Mammary epithelial cell (primary cell): ENCODE measurements at regions of chr14 and their contacts with region 1.

Region 1: DNA sequence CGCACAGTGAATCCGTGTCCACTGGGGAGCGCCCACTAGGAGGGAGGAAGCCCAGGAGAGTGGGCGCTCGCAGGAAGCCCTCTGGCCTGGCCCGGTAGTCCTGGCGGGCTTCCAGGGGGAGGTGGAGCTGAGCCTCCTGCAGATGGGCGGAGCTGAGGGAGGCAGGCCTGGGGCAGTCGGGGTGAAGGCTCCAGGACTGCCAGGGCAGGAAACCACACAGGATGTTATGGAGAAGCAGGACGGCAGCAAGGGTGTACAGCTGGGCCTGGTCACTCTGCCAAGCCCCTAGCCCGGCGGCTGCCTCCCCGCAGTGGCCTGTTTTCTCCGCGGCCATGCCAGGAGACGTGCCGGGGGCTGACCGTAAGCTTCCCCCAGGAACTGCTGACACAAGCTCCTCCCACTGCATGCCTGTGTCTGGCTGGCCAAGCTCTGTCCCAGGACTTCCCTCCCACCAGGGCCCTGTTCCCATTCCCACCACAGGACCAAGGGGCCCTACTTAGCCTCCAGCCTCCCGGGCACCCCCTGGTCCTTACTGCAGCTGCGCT is 143.4 kb upstream of the C14orf180 start:
- DNase-seq: no peak
- H3K4me3 ChIP-seq: no peak overlapping the region
- H3K27ac ChIP-seq: no peak overlapping the region
- H3K4me1 ChIP-seq: no peaks in the 10 kb centered on the region
- H3K27me3 ChIP-seq: no peaks in the 10 kb centered on the region
- CTCF ChIP-seq: no peak

Region 2: DNA sequence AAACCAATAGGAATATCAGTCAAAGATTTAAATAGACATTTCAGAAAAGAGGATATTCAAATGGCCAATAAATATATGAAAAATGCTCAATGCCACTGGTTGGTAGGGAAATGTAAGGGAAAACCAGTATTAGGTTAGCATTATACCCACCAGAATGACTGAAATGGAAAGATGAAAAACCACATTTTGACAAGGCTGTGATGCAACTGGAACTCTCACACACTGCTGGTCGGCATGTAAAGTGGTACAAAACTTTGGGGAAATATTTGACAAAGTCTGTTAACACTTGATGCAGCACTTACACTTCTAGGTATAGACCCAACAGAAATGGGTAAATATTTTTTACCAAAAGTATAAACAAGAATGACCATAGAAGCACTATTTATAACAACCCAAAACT is 19.7 kb before region 1 on chr14:
- CTCF ChIA-PET with region 1: no interaction called
- dilution Hi-C with region 1: no loop called
- in situ Hi-C with region 1: no loop called
- intact Hi-C with region 1: no loop called
- DNase-seq: no peak
- H3K4me3 ChIP-seq: no peak overlapping the region
- H3K27ac ChIP-seq: no peak overlapping the region
- H3K4me1 ChIP-seq: no peaks in the 10 kb centered on the region
- H3K27me3 ChIP-seq: no peaks in the 10 kb centered on the region
- CTCF ChIP-seq: no peak

Region 3: DNA sequence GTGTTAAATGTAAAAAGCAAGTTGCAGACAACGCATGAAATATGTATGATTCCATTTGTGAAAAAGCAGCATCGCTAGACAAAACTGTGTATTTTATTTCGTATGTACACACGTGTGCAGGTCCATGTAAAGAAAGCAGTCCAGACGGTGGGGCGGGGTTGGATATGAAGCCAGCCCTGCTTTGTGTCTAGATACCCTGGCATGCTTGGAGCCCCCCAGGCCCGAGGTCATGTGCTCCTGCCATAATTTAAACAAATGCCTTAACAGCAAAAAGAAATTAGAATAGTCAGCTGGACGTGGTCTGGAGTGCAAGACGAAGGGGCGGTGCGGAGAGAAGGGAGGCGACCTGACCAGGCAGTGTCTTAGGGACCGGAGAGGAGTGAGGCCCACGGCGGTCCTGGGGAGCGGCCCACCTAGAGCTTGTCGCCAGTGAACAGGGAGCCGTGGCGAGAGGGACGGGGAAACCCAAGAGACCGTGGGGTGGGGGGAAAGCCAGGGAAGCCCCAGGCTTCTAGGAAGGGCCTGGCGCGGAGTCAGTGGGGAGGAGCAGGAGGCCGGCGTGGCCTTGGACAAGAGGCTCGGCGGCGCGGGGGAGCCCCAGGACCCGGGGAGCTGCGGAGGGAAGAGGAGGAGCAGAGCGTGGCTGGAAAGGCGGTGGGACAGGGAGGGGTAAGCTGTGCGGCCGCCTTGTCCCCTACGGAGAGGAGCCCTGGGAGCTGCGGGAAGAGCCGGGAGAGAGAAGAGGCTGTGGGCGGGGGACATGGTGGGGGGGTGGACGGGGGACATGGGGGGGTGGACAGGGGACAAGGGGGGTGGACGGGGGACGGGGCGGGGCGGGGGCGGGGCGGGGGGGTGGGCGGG is 24.9 kb after region 1 on chr14:
- CTCF ChIA-PET with region 1: no interaction called
- dilution Hi-C with region 1: no loop called
- in situ Hi-C with region 1: no loop called
- intact Hi-C with region 1: no loop called
- DNase-seq: no peak
- H3K4me3 ChIP-seq: no peak overlapping the region
- H3K27ac ChIP-seq: no peak overlapping the region
- H3K4me1 ChIP-seq: no peaks in the 10 kb centered on the region
- H3K27me3 ChIP-seq: peaks cover 8% of the 10 kb centered on the region
- CTCF ChIP-seq: no peak

Region 4: DNA sequence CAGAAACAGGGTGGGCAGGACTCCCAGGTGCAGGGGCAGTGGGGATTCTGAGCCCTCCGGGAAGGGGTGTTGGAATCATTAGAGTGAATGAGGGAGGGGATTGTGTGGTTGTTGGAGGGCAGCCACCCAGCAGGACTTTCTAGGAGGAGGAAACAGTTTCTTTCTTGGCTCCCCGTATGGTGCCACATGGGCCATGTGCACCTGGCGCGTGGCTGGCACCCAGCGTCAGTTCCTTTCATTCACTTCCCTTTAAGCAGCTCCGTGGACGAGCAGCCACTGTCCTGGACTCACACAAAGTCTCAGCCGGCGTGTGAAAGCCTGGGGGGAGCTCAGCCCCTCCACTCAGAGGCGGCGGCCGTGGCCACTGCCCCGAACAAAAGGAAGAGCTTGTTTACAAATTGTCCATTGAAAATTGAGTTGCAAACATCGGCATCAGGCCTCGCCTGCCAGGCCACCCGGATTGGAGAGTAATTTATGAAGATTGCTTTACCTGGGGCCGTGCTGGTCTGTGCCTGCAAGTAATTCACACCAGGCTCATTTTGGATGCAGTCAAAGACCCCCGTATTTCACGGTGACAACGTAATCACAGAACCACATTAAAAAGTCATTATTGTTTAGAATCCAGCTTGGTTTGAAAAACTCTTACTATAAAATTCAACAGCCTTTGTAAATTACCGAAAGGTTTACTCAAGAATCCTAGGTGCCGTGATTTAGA is 41.7 kb after region 1 on chr14:
- CTCF ChIA-PET with region 1: no interaction called
- dilution Hi-C with region 1: loop called (anchors 5 kb)
- in situ Hi-C with region 1: no loop called
- intact Hi-C with region 1: no loop called
- DNase-seq: no peak
- H3K4me3 ChIP-seq: no peak overlapping the region
- H3K27ac ChIP-seq: no peak overlapping the region
- H3K4me1 ChIP-seq: no peaks in the 10 kb centered on the region
- H3K27me3 ChIP-seq: no peaks in the 10 kb centered on the region
- CTCF ChIP-seq: no peak